ENCODE measurements at regions of chr16 and their contacts with region 1.

Region 1: GRCh38 chr16:28524681-28525171 is 14.0 kb downstream of the NUPR1 start:
- DNase-seq: no peak
- H3K4me3 ChIP-seq: no peak overlapping the region
- H3K27ac ChIP-seq: no peak overlapping the region
- H3K4me1 ChIP-seq: no peaks in the 10 kb centered on the region
- H3K27me3 ChIP-seq: no peaks in the 10 kb centered on the region
- CTCF ChIP-seq: no peak

Region 2: GRCh38 chr16:28264656-28265055 is 260.1 kb before region 1 on chr16:
- CTCF ChIA-PET with region 1: no interaction called
- dilution Hi-C with region 1: loop called (anchors 10 kb)
- in situ Hi-C with region 1: no loop called
- intact Hi-C with region 1: no loop called
- DNase-seq: peak; percentile 23
- H3K4me3 ChIP-seq: no peak overlapping the region
- H3K27ac ChIP-seq: no peak overlapping the region
- H3K4me1 ChIP-seq: no peaks in the 10 kb centered on the region
- H3K27me3 ChIP-seq: no peaks in the 10 kb centered on the region
- CTCF ChIP-seq: peak in 1 of 2 donors; percentile 2

Region 3: DNA sequence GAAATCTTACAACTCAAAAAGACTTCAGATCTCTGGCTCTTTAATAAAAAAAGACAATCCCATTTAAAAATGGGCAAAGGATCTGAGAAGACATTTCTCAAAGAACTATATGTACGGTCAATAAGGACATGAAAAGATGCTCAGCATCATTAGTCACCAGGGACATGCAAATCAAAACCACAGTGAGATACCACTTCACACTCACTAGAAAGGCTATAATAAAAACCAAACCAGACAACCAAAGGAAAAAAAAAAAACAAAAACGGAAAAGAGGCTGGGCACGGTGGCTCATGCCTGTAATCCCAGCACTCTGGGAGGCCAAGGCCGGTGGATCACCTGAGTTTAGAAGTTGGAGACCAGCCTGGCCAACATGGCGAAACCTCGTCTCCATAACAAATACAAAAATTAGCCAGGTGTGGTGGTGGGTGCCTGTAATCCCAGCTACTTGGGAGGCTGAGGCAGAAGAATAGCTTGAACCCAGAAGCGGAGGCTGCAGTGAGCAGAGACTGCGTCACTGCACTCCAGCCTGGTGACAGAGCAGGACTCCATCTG is 50.9 kb before region 1 on chr16:
- CTCF ChIA-PET with region 1: no interaction called
- dilution Hi-C with region 1: no loop called
- in situ Hi-C with region 1: loop called in 1 of 2 experiments (anchors 10 kb)
- intact Hi-C with region 1: no loop called
- DNase-seq: no peak
- H3K4me3 ChIP-seq: no peak overlapping the region
- H3K27ac ChIP-seq: no peak overlapping the region
- H3K4me1 ChIP-seq: no peaks in the 10 kb centered on the region
- H3K27me3 ChIP-seq: no peaks in the 10 kb centered on the region
- CTCF ChIP-seq: no peak

Region 4: DNA sequence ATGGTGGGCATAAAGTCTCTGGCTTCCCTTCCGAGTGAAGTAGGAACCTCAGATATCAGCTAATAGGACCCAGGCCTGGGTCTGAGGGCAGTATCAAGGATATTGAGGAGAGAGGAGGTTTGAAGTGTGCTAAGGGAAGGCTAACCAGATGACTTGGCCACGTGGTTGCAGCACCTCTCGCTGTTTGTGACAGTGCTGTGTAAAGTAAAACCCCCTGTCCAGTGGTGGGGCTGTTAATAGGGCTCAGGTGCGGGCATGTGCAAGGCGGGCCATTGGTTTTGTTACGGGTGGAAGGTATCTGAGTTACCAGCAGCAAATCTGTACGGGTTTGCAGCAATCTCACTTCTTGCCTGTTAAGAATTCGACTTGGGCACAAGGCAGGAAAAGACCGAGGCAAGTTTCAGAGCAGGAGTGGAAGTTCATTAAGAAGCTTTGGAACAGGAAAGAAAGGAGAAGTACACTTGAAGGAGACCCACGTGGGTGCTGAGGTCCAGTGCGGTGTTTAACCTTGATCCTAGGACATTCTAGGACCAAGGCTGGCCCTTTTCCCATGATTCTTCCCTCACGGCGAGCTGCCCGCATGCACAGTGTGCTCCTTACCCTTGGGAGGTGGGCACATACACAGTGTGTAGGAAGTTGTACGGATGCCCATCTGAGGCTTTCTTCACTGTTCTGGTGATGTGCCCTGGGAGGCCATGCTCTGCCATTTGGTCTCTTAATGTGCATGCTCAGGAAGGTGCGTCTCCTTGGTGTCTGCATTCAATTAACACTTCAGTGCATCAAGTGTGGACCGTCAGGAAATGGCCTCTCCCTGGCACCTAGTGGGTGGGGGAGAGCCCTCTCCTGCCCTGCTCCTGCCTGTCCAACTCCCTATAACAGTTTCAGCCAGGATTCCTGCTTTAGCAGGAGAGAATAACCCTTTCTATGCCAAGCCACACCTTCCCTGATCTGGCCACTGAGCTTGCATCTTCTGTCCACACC is 49.3 kb after region 1 on chr16:
- CTCF ChIA-PET with region 1: no interaction called
- dilution Hi-C with region 1: no loop called
- in situ Hi-C with region 1: no loop called
- intact Hi-C with region 1: no loop called
- DNase-seq: no peak
- H3K4me3 ChIP-seq: no peak overlapping the region
- H3K27ac ChIP-seq: no peak overlapping the region
- H3K4me1 ChIP-seq: no peaks in the 10 kb centered on the region
- H3K27me3 ChIP-seq: no peaks in the 10 kb centered on the region
- CTCF ChIP-seq: no peak